Heart right ventricle (tissue), 16 donors: ENCODE measurements at regions of chr6 and their contacts with region 1.

Region 1: GRCh38 chr6:3751730-3752542 is 423 bp upstream of the PXDC1 start:
- DNase-seq: peak; percentile 88 to 90
- ATAC-seq: peak; percentile 66 to 80 (median 72)
- H3K4me3 ChIP-seq: peak overlapping the region; percentile 66 to 97 (median 86)
- H3K27ac ChIP-seq: peak overlapping the region; percentile 96 to 99 (median 98)
- H3K4me1 ChIP-seq: peaks cover 2 to 60% (median 35%) of the 10 kb centered on the region in 9 donors
- H3K27me3 ChIP-seq: peaks cover 0 to 46% (median 0%) of the 10 kb centered on the region in 7 donors
- CTCF ChIP-seq: peak; percentile 9 to 55 (median 40)

Region 2: DNA sequence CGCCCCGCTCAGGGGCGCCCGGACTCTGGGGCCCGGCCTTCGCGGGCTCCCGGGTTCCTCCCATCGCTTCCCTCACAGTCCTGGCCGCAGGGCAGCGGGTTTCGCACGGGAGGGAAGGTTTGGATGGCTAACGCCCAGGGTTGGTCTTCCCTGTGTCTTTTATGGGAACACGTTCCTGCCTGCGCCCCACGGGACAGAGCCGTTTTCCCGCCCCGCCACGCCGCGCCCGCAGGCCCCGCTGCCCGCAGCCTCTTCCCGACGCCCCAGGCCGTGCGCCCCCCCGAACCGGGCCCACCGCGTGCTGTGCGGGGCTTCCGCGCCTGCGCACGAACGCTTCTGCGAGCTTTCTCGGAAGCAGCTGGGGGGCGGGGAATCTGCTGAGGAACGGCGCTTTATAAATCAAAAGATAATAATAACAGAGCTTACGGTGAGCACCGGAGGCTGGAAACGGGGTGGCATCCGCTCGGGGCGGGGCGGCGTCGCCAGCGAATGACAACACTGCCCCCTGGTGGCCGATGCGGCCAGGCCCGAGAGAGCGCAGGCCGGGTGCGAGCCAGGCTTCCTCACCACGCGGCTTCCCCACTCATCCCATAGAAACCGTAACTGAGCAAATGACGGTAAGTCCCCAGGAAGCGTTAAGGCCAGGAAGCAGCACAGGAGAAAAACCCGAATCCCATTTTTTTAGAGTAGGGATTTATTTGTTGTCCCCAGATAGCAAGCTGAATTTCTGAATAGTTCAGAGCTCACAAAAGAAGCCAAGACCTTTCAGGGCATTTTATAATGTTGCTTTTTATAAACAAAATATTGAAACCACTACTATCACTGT is 1117.6 kb before region 1 on chr6:
- intact Hi-C with region 1: no loop called
- DNase-seq: peak; percentile 88
- ATAC-seq: peak; percentile 90 to 94 (median 92)
- H3K4me3 ChIP-seq: peak overlapping the region; percentile 36 to 59 (median 58)
- H3K27ac ChIP-seq: peak overlapping the region; percentile 20 to 94 (median 78)
- H3K4me1 ChIP-seq: peaks cover 2 to 34% (median 22%) of the 10 kb centered on the region in 9 donors
- H3K27me3 ChIP-seq: no peaks in the 10 kb centered on the region
- CTCF ChIP-seq: peak; percentile 96 to 99 (median 99)

Region 3: GRCh38 chr6:3438190-3439167 is 313.5 kb before region 1 on chr6:
- intact Hi-C with region 1: no loop called
- DNase-seq: no peak
- ATAC-seq: peak in 4 of 8 donors; percentile 24 to 62 (median 50)
- H3K4me3 ChIP-seq: no peak overlapping the region
- H3K27ac ChIP-seq: peak overlapping the region in 1 of 10 donors; percentile 29
- H3K4me1 ChIP-seq: peaks cover 0 to 15% (median 0%) of the 10 kb centered on the region in 9 donors
- H3K27me3 ChIP-seq: no peaks in the 10 kb centered on the region
- CTCF ChIP-seq: no peak

Region 4: DNA sequence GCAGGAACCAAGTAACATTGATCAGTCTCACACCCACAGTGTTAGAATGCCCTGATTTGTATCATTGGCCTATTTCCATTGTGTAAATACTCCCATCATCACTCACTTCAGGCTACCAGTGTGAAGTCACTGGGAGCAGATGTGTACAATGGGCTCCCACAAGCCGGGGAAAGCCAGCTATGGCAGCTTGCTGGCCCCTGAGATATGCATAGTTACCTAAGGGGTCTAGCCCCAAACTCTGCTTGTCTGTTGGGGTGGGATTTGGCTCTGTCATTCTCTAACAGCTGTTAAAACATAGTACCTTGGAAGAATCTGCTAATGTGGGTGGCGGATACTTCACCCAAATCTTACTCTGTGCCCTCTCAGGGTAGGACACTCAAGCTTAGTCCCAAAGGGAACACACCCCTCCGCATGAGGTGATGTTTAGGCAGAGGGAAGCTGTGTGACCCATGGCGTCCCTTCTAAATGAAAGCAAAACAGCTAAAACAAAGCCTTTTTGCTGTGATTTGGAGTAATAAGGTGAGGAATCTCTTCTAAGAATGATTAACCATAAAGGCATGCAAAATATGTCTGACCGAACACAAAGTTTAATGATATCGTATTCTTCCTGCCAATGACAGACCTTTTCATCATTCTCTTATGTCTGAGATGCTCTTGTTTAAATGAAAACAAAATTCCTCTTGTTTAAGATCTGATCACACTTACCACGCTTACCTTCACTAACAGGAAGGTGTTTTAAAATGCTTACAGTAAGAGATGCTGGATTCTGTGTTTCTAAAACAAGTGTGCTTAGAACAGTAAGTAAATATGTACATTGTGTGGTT is 45.5 kb after region 1 on chr6:
- intact Hi-C with region 1: loop called in 3 of 10 experiments (anchors 2 to 5 kb)
- DNase-seq: no peak
- ATAC-seq: no peak
- H3K4me3 ChIP-seq: no peak overlapping the region
- H3K27ac ChIP-seq: peak overlapping the region in 5 of 10 donors; percentile 8 to 61 (median 56)
- H3K4me1 ChIP-seq: peaks cover 6 to 66% (median 35%) of the 10 kb centered on the region in 9 donors
- H3K27me3 ChIP-seq: no peaks in the 10 kb centered on the region
- CTCF ChIP-seq: no peak

Region 5: GRCh38 chr6:3808759-3809514 is 57.0 kb after region 1 on chr6:
- intact Hi-C with region 1: loop called in 1 of 10 experiments (anchors 5 kb)
- DNase-seq: peak in 1 of 2 donors; percentile 24
- ATAC-seq: peak in 6 of 8 donors; percentile 37 to 77 (median 42)
- H3K4me3 ChIP-seq: no peak overlapping the region
- H3K27ac ChIP-seq: peak overlapping the region in 3 of 10 donors; percentile 31 to 53 (median 47)
- H3K4me1 ChIP-seq: peaks cover under 1 to 46% (median 38%) of the 10 kb centered on the region in 9 donors
- H3K27me3 ChIP-seq: no peaks in the 10 kb centered on the region
- CTCF ChIP-seq: no peak

Region 6: DNA sequence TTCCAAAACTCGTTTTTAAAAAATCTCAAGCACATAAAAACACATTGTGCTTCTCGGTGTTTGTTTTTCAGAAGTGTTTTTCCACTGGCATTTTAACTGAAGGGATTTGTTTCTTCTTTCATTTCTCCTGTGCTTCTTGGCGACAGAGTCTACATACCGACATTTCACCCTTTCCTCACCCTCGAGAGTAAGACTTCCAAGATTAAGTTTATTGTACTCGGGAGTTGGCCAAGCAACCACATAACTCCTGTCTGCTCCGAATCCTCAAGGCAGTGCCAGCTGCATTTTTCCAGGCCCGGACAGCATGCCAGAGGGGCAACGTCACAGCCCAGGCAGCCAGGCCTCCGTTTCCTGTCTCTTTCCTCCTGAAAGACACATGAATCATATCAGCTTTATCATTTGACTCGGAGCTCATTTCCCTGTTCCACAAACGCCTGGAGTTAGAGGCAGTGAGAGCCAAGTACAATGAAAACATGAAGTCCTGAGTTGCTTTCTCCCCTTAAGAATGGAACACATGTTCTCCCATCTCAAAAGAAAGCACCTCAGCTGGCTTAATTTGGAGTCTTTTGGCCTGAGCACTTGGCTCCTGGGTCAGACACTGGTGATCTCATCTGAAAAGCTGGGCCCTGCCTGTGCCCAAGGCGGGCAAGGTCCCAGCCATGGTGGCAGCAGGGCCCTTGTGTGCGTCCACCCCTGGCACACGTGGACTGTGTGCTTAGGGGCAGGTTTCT is 74.1 kb after region 1 on chr6:
- intact Hi-C with region 1: loop called in 9 of 10 experiments (anchors 2 to 10 kb)
- DNase-seq: peak; percentile 86 to 87
- ATAC-seq: peak; percentile 84 to 95 (median 93)
- H3K4me3 ChIP-seq: peak overlapping the region in 6 of 10 donors; percentile 8 to 36 (median 20)
- H3K27ac ChIP-seq: peak overlapping the region; percentile 75 to 92 (median 90)
- H3K4me1 ChIP-seq: peaks cover 10 to 44% (median 38%) of the 10 kb centered on the region in 9 donors
- H3K27me3 ChIP-seq: no peaks in the 10 kb centered on the region
- CTCF ChIP-seq: no peak

Region 7: DNA sequence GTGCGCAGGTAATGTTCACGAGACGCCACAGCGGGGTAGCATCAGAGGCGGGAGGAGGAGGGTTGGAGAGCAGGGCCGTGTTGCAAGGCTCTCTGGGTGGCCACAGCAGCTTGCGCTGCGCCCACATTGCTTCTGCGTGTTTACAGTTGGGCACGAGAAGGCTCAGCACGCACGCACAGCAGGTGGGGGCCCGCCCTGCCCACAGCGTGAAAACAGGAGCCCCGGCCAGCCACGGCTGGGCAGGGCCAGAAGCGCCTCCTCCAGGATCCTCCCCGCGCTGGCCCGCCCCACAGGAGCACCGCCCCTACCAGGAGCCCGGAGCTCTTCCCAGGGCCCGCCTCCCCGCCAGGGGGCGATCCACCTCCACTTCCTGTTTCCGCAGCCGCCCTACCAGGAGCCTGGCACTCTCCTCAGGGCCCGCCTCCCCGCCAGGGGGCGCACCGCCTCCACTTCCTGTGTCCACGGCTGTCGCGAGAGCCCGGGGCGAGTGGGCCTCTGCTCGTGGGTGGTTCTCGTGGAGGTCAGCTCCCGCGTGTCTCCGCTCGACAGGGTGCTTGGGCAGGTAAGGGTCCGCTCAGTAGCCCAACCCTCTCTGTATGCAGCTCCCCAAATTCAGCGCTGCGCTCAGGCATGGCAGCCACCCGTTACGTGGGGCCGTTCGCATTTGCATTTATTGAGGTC is 97.1 kb after region 1 on chr6 and contains the start of gene FAM50B:
- intact Hi-C with region 1: loop called in 2 of 10 experiments (anchors 5 kb)
- DNase-seq: peak; percentile 92 to 96
- ATAC-seq: peak; percentile 95 to 100 (median 98)
- H3K4me3 ChIP-seq: peak within 1 kb of the TSS; percentile 29 to 69 (median 60)
- H3K27ac ChIP-seq: peak within 1 kb of the TSS in 9 of 10 donors; percentile 69 to 83 (median 78)
- H3K4me1 ChIP-seq: peaks cover 0 to 28% (median 5%) of the 10 kb centered on the region in 9 donors
- H3K27me3 ChIP-seq: no peaks in the 10 kb centered on the region
- CTCF ChIP-seq: peak; percentile 84 to 98 (median 96)
- total RNA-seq, gene FAM50B: 13.2 to 31.3 (median 22.4) TPM

Region 8: DNA sequence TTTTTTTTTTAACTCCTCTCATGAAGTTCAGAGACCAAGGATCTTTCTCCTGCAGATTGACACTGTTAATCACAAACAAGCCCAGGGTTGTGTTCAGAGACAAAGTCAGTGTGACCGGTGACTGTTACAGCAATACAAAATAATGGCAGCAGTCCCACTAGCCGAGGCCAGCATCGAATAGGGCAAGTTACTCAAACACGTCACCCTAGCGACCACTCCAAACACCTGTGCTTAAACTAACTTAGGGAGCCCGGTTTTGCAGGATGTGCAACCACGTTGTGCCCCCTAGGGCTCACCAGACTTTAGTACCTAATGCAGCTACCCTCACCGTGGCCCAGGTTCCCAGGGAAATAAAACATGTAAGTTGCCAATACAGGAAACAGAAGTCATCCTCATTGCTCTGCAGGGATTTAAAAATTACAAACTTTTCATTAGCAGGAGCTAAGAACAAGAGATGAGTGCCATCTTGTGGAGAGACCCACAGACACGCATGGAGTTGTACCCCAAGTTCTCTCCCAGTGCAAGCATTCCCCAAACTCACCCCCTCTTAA is 135.3 kb after region 1 on chr6:
- intact Hi-C with region 1: loop called in 4 of 10 experiments (anchors 2 to 5 kb)
- DNase-seq: peak in 1 of 2 donors; percentile 29
- ATAC-seq: peak in 7 of 8 donors; percentile 10 to 49 (median 37)
- H3K4me3 ChIP-seq: no peak overlapping the region
- H3K27ac ChIP-seq: peak overlapping the region in 1 of 10 donors; percentile 26
- H3K4me1 ChIP-seq: peaks cover 17 to 57% (median 34%) of the 10 kb centered on the region in 9 donors
- H3K27me3 ChIP-seq: no peaks in the 10 kb centered on the region
- CTCF ChIP-seq: peak; percentile 30 to 73 (median 57)